ENCODE measurements at regions of chr14 and their contacts with region 1.

Region 1: DNA sequence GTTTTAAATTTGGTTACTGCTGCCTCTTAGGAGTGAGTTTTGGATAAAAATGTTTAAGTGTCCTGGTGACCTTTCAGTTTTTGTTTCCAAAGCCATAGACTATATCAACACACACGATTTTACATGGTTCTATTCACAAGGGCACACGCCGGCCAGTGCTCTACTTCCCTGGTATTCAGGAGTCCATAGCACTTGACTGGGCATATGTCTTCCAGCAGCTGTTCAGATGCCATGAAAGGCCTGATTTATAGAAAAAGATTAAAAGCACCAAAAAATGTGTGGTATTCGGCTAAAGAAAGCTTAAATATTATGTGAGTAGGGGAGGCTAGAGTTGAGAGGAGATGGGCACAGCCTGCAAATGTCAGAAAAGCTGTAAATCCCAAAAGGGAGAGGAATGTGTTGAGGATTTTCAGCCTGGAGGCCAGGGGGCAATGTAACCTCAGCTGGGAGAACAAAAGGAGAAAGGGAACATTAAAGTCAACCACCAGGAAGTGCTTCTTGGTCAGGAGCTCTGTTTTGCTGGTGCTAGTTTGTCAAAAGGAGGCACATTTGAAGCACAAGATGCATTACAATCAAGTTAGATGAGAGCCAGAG is 478.4 kb downstream of the RAD51B start:
- DNase-seq: no peak
- H3K4me3 ChIP-seq: no peak overlapping the region
- H3K27ac ChIP-seq: no peak overlapping the region
- H3K4me1 ChIP-seq: peaks cover 8 to 24% (median 18%) of the 10 kb centered on the region in 4 donors
- H3K27me3 ChIP-seq: no peaks in the 10 kb centered on the region
- CTCF ChIP-seq: peak in 1 of 5 experiments; percentile 9
- EP300 ChIP-seq: no peak
- POLR2A ChIP-seq: no peak

Region 2: GRCh38 chr14:68283378-68284123 is 14.4 kb before region 1 on chr14:
- in situ Hi-C with region 1: no loop called
- intact Hi-C with region 1: no loop called
- DNase-seq: peak; percentile 51
- H3K4me3 ChIP-seq: no peak overlapping the region
- H3K27ac ChIP-seq: peak overlapping the region; percentile 13 to 50 (median 34)
- H3K4me1 ChIP-seq: peaks cover 0 to 42% (median 9%) of the 10 kb centered on the region in 4 donors
- H3K27me3 ChIP-seq: no peaks in the 10 kb centered on the region
- CTCF ChIP-seq: no peak
- EP300 ChIP-seq: no peak
- POLR2A ChIP-seq: no peak

Region 3: DNA sequence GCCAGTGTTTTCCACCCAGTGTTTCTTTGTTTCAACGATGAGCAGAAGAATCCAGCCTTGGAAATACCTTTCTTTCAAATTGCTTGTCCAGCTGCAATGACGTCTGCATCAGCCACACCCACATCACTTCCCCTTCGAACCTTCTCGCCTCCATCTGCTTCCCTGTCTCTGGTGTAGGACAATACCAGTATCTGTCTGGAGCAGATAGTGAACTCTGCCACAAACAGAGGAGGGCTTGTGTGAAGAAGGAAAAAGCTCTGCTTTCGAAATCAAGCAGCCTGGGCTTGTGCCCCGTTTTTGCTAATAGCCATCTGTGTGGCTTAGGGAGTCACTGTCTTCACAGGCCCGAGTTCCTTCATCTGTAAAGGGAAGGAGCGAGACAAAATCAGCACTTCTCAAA is 79.5 kb after region 1 on chr14:
- in situ Hi-C with region 1: no loop called
- intact Hi-C with region 1: loop called (anchors 5 kb)
- DNase-seq: peak; percentile 76
- H3K4me3 ChIP-seq: no peak overlapping the region
- H3K27ac ChIP-seq: peak overlapping the region; percentile 61 to 78 (median 71)
- H3K4me1 ChIP-seq: peaks cover 23 to 43% (median 29%) of the 10 kb centered on the region in 4 donors
- H3K27me3 ChIP-seq: no peaks in the 10 kb centered on the region
- CTCF ChIP-seq: no peak
- EP300 ChIP-seq: no peak
- POLR2A ChIP-seq: peak; percentile 21